Mammary epithelial cell (primary cell): ENCODE measurements at regions of chr14 and their contacts with region 1.

Region 1: GRCh38 chr14:68951042-68951914 is 27.8 kb downstream of the ACTN1 start:
- DNase-seq: peak; percentile 100
- H3K4me3 ChIP-seq: peak overlapping the region in 1 of 3 experiments; percentile 21
- H3K27ac ChIP-seq: peak overlapping the region; percentile 88
- H3K4me1 ChIP-seq: peaks cover 95% of the 10 kb centered on the region
- H3K27me3 ChIP-seq: no peaks in the 10 kb centered on the region
- CTCF ChIP-seq: no peak

Region 2: DNA sequence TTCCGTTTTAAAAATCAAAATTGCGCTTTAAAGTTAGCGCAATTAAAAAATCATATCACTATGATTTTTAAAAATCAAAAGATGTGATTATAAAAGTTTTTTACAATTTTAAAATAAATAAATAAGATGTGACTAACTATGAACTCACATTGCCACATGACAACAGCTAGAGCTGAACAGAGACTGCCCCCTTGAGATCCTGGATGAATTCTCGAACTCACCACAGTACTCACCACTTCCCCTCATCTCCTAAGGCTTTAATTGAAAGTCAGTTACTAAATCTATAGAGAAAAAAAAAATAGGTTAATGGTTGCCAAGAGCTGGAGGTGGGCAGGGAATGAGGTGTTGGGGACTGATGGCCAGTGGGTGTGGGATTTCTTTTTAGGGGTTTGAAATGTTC is 542.6 kb before region 1 on chr14:
- CTCF ChIA-PET with region 1: no interaction called
- dilution Hi-C with region 1: no loop called
- in situ Hi-C with region 1: no loop called
- intact Hi-C with region 1: no loop called
- DNase-seq: no peak
- H3K4me3 ChIP-seq: no peak overlapping the region
- H3K27ac ChIP-seq: no peak overlapping the region
- H3K4me1 ChIP-seq: peaks cover 44% of the 10 kb centered on the region
- H3K27me3 ChIP-seq: no peaks in the 10 kb centered on the region
- CTCF ChIP-seq: no peak

Region 3: DNA sequence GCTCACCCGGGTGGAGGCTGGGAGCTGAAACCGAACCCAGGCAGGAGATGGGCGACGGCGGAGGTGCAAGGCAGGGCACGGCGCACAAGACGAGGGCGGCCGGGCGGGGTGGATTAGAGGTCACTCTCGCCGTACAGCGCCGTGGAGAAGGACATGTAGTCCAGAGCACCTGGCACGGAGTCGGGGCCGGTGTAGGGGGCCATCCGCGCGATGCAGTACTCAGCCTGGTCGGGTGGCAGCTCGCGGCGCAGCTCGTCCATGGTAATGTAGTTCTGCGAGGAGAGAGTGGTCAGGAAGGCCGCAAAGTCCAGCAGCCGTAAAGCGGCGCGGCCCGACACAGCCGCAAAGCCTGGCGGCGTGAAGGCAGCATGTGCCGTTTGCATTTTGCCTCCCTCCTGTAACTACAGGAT is 76.5 kb before region 1 on chr14:
- CTCF ChIA-PET with region 1: no interaction called
- dilution Hi-C with region 1: loop called (anchors 5 kb)
- in situ Hi-C with region 1: no loop called
- intact Hi-C with region 1: no loop called
- DNase-seq: no peak
- H3K4me3 ChIP-seq: no peak overlapping the region
- H3K27ac ChIP-seq: no peak overlapping the region
- H3K4me1 ChIP-seq: no peaks in the 10 kb centered on the region
- H3K27me3 ChIP-seq: no peaks in the 10 kb centered on the region
- CTCF ChIP-seq: no peak

Region 4: GRCh38 chr14:68905107-68905895 is 46.0 kb before region 1 on chr14:
- CTCF ChIA-PET with region 1: no interaction called
- dilution Hi-C with region 1: loop called (anchors 5 kb)
- in situ Hi-C with region 1: no loop called
- intact Hi-C with region 1: no loop called
- DNase-seq: no peak
- H3K4me3 ChIP-seq: no peak overlapping the region
- H3K27ac ChIP-seq: no peak overlapping the region
- H3K4me1 ChIP-seq: no peaks in the 10 kb centered on the region
- H3K27me3 ChIP-seq: no peaks in the 10 kb centered on the region
- CTCF ChIP-seq: no peak

Region 5: DNA sequence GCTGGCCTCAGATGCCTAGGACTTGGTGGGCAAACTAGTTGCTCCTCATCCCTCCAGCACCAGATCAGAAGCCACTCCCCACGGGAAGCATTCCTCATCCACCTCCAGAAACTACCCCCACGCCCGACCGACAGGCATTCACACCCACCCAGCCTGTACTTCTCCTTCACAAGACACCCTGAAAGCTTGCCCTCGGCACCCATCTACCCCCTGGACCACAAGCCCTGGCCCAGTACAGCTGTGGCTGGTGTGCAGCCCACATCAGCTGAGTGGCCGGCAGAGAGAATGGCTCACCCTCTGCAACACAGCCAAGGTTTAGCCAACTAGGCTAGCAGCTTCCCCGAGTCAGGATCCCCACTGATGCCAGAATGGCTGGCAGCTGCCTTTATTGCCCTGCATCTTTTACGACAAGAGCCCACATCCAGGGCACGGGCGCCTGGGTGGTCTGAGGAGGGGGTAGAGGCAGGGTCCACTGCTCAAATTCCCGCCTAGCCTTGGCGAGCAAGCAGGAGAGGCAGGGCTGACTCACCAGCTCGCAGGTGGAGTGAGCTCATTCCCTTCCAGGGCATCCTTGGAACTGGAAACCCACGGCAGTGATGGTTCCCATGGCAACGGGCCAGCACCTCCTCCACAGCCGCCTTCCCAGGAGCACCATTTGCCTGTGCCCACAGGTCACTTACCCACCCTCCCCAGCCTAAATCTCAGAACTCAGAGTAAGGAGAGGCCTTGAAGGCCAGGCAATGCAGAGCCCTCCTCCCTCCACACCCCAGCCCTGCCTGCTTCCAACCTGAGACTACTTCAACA is 10.7 kb after region 1 on chr14:
- CTCF ChIA-PET with region 1: no interaction called
- dilution Hi-C with region 1: no loop called
- in situ Hi-C with region 1: no loop called
- intact Hi-C with region 1: loop called (anchors 1 kb)
- DNase-seq: peak; percentile 92
- H3K4me3 ChIP-seq: no peak overlapping the region
- H3K27ac ChIP-seq: peak overlapping the region; percentile 43
- H3K4me1 ChIP-seq: peaks cover 99% of the 10 kb centered on the region
- H3K27me3 ChIP-seq: no peaks in the 10 kb centered on the region
- CTCF ChIP-seq: no peak

Region 6: DNA sequence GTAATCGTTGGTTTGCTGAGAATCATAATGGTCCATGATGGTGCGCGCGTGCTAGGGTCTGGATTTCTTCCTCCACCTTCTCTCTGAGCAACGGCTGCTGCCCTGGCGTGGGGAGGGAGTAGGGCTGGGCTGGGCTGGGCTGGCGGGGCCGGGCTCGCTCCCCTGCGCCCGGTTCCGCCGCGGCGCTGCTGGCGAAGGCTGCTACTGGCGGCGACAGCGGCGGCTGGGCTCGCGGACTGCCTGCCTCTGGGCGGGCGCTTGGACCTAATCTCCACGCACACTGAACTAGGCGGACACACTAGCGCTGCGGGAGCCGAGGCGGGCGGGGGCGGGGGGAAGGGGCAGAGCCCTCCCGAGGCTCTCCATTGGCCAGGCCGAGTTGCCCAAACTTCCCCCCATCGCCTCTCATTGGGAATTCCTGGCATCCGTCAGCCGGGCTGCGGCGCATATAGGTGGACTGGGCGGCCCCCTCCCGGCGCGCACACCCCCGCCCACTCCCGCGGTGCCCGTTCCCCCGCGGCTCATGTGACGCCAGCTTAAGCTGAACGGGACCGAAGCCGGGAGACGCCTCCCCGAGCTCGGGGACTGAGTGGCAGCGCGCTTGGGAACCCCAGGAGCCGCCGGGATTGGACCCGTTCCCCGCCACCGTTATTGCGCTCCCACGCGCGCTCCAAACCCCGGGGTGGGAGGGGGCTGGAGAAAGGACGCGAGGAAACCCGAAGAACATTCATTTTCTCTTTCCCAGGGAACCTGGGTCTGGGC is 27.9 kb after region 1 on chr14 and contains the start of gene ACTN1:
- CTCF ChIA-PET with region 1: interaction called, 8 read pairs
- dilution Hi-C with region 1: no loop called
- in situ Hi-C with region 1: no loop called
- intact Hi-C with region 1: loop called (anchors 1 kb)
- DNase-seq: peak; percentile 98
- H3K4me3 ChIP-seq: peak within 1 kb of the TSS; percentile 86 to 96 (median 96)
- H3K27ac ChIP-seq: peak within 1 kb of the TSS; percentile 85
- H3K4me1 ChIP-seq: peaks cover 45% of the 10 kb centered on the region
- H3K27me3 ChIP-seq: no peaks in the 10 kb centered on the region
- CTCF ChIP-seq: no peak
- total RNA-seq, gene ACTN1: 841 to 1,322 TPM

Region 7: GRCh38 chr14:69049675-69050074 is 98.4 kb after region 1 on chr14:
- CTCF ChIA-PET with region 1: no interaction called
- dilution Hi-C with region 1: loop called (anchors 5 kb)
- in situ Hi-C with region 1: no loop called
- intact Hi-C with region 1: no loop called
- DNase-seq: no peak
- H3K4me3 ChIP-seq: no peak overlapping the region
- H3K27ac ChIP-seq: no peak overlapping the region
- H3K4me1 ChIP-seq: peaks cover 8% of the 10 kb centered on the region
- H3K27me3 ChIP-seq: no peaks in the 10 kb centered on the region
- CTCF ChIP-seq: no peak

Region 8: GRCh38 chr14:69081271-69081670 is 130.0 kb after region 1 on chr14:
- CTCF ChIA-PET with region 1: no interaction called
- dilution Hi-C with region 1: no loop called
- in situ Hi-C with region 1: no loop called
- intact Hi-C with region 1: no loop called
- DNase-seq: no peak
- H3K4me3 ChIP-seq: no peak overlapping the region
- H3K27ac ChIP-seq: no peak overlapping the region
- H3K4me1 ChIP-seq: peaks cover 29% of the 10 kb centered on the region
- H3K27me3 ChIP-seq: no peaks in the 10 kb centered on the region
- CTCF ChIP-seq: no peak